Colonic mucosa (tissue), 4 donors: ENCODE measurements at regions of chr15 and their contacts with region 1.

Region 1: GRCh38 chr15:66190746-66191145 is 62.8 kb downstream of the MEGF11 start:
- DNase-seq: no peak
- H3K4me3 ChIP-seq: no peak overlapping the region
- H3K27ac ChIP-seq: no peak overlapping the region
- H3K4me1 ChIP-seq: no peaks in the 10 kb centered on the region
- H3K27me3 ChIP-seq: no peaks in the 10 kb centered on the region
- CTCF ChIP-seq: no peak

Region 2: GRCh38 chr15:65980824-65981456 is 209.8 kb before region 1 on chr15:
- intact Hi-C with region 1: loop called (anchors 2 kb)
- DNase-seq: peak; percentile 72
- H3K4me3 ChIP-seq: no peak overlapping the region
- H3K27ac ChIP-seq: no peak overlapping the region
- H3K4me1 ChIP-seq: no peaks in the 10 kb centered on the region
- H3K27me3 ChIP-seq: no peaks in the 10 kb centered on the region
- CTCF ChIP-seq: peak; percentile 78